PC-9 (cell line): ENCODE measurements at regions of chr19 and their contacts with region 1.

Region 1: GRCh38 chr19:14081325-14082093 is 4.1 kb downstream of the C19orf67 start:
- DNase-seq: peak; percentile 99
- H3K4me3 ChIP-seq: peak overlapping the region; percentile 85
- H3K27ac ChIP-seq: peak overlapping the region; percentile 71
- H3K4me1 ChIP-seq: peaks cover 16% of the 10 kb centered on the region
- H3K27me3 ChIP-seq: no peaks in the 10 kb centered on the region
- CTCF ChIP-seq: peak; percentile 17; the same call in 1 of the 2 replicates

Region 2: GRCh38 chr19:14117668-14118164 is 36.2 kb after region 1 on chr19 and contains the start of gene PRKACA:
- CTCF ChIA-PET with region 1: interaction called, 3 read pairs
- POLR2A ChIA-PET with region 1: no interaction called
- intact Hi-C with region 1: loop called (anchors 5 kb)
- DNase-seq: peak; percentile 97 to 99
- H3K4me3 ChIP-seq: peak within 1 kb of the TSS; percentile 82
- H3K27ac ChIP-seq: peak within 1 kb of the TSS; percentile 65
- H3K4me1 ChIP-seq: peaks cover 21% of the 10 kb centered on the region
- H3K27me3 ChIP-seq: no peaks in the 10 kb centered on the region
- CTCF ChIP-seq: no peak
- total RNA-seq, gene PRKACA: 62.0 and 82.8 TPM in 2 replicates